Activated naive CD4-positive, alpha-beta T cell treated with anti-CD3 and anti-CD28 coated beads for 36 hours (primary cell): ENCODE measurements at regions of chr1 and their contacts with region 1.

Region 1: DNA sequence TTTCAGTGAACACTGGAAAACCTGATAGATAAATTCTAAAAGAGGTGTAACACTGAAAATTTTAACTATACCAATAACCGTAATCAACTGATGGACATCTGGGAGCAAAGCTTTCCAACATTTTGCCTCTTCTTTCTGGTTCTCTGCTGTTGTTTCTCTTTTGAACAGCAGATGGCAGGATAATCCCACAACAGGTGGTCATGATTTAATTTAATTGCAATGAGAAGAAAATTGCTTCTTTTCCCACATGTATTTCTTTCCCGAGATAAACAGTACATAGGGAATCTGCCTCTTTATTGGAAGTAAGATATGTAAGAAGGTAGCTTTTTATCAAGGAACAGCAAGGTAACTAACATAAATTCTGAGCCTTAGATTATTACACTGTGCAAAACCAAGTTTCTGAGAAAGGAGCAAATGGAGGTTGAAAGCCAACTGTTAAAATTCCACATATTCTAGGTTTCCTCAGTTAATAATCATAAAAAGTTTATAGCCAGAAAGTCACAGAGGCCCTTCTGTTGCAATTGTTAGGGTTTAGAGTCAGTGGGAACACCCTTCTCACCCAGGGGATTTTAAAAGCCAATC is 72.9 kb downstream of the RPS6KA1 start:
- DNase-seq: peak; percentile 62
- H3K4me3 Mint-ChIP-seq: no peak overlapping the region
- H3K27ac Mint-ChIP-seq: no peak overlapping the region
- H3K4me1 Mint-ChIP-seq: peaks cover 8% of the 10 kb centered on the region
- H3K27me3 Mint-ChIP-seq: peaks cover 3% of the 10 kb centered on the region

Region 2: DNA sequence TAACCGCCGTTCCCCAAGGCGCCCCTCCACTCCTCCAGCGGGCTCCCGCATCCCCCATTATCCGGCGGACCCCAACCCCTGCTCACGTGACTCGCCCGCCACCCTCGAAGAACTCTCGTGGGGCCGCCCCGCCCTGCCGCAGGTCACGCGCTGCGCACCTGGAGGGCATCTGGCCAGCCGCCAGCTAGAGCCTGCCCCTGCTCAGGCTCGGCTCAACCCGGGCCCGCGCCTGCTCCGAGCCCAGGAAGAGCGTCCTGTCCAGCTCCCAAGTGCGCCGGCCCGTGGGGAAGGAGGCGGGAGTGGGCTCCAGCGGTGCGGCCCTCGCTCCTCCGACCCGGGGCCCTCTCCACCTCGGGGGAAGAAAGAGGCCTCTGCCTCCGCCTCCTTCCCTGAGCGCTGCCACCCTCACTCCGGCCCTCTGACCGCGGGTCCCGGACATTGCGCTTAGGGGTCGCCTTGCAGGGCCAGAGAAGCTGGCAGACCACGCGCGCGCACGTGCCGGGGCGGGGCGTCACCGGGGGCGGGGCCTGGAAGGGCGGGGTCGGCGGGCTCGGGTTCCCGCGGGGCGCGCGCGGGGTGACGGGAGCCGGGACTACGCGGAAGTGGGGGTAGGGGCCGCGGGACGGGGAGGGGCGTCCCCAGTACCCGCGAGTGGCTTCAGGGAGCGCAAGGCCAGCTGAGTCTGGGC is 101.8 kb before region 1 on chr1:
- CTCF ChIA-PET with region 1: interaction called, 9 read pairs
- intact Hi-C with region 1: loop called (anchors 1 kb)
- DNase-seq: peak; percentile 93
- H3K4me3 Mint-ChIP-seq: peak overlapping the region; percentile 87
- H3K27ac Mint-ChIP-seq: peak overlapping the region; percentile 96
- H3K4me1 Mint-ChIP-seq: peaks cover 18% of the 10 kb centered on the region
- H3K27me3 Mint-ChIP-seq: no peaks in the 10 kb centered on the region

Region 3: DNA sequence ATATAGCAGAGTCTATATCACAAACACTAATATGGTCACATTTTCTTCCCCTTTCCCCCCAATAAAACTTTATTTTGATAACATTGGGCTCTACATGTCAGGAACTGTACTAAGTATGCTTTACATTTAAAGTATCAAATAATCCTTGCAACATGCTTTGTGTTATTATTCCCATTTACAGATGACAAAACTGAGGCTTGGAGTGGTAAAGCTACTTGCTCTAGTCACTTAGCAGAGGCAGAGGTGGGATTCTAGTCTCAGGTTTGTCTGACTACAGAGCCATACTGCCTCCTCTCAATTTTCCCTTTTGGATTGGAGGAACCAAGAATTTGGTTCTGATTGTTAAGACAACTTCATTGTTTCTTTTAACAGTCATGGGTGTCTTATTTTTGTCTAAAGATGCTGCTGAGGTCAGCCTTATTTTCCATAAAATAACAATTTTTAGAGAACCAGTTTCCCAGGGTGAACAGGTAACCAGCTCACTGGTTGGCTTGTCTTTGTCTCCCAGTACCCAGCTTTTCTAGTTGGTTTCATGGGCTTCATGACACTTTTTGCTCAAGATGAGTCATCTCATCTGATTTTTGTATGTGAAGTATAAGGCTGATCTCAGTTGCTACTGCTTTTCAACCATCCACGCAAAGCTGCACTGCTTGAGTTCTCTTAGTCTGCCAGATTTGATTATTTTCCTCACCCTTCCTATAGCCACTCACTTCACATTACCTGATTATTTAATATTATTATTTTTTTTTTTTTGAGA is 12.4 kb after region 1 on chr1:
- CTCF ChIA-PET with region 1: interaction called, 13 read pairs
- intact Hi-C with region 1: no loop called
- DNase-seq: no peak
- H3K4me3 Mint-ChIP-seq: no peak overlapping the region
- H3K27ac Mint-ChIP-seq: no peak overlapping the region
- H3K4me1 Mint-ChIP-seq: peaks cover 19% of the 10 kb centered on the region
- H3K27me3 Mint-ChIP-seq: no peaks in the 10 kb centered on the region

Region 4: DNA sequence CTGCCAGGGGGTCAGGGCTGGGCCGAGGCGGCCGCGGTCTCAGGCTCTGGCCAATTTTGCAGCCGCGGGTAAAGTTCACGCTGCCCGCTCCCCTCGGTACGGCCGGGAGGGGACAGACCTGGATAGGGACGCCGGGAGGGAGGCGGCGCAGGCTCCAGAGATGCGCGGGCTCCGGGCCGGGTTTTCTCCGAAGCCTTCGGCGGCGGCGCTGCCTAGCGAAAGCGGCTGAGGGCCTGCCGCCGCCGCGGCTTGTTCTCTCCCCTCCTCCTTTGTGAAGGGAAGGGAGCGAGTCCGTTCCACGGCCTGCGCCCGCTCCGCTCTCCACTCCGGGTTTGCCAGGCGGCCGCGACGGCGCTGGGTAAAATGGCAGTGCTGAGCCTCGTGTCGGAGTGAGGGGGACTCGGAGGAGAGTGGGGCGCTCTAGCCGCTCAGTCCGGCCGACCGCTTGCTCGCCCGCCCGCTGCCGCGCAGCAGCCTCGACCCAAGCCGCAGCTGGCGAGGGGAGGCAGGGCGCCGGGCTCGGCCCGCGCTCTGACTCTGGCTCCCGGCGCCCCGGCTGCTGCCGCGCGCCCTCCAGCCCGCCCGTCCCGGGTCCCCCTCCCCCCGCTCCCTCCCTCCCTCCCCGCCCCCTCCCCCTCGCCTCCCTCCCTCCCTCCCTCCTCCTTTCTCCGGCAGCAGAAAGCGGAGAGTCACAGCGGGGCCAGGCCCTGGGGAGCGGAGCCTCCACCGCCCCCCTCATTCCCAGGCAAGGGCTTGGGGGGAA is 93.1 kb after region 1 on chr1 and contains the start of gene ARID1A:
- CTCF ChIA-PET with region 1: interaction called, 14 read pairs
- intact Hi-C with region 1: no loop called
- DNase-seq: peak; percentile 95
- H3K4me3 Mint-ChIP-seq: peak within 1 kb of the TSS; percentile 81
- H3K27ac Mint-ChIP-seq: peak within 1 kb of the TSS; percentile 91
- H3K4me1 Mint-ChIP-seq: peaks cover 22% of the 10 kb centered on the region
- H3K27me3 Mint-ChIP-seq: no peaks in the 10 kb centered on the region
- total RNA-seq, gene ARID1A: 65.0 to 65.9 TPM

Region 5: DNA sequence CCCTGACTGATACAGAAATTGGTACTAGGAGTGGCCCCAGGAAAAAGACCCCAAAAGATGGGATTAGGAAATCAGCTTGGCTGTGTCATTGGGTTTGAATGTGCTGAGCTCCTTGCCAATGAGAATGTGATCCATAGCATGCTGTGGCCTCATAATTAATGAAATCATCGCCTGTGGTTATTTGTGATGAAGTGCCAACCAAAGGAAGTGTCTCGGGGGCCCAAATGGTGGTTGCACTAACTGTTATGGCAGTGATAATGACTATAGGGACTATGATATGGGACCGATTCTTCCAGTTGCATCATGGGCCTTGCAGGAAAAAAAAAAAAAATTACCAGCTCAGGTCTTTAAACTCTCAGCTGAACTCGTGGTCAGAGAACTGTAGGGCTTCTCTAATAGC is 208.6 kb after region 1 on chr1:
- CTCF ChIA-PET with region 1: interaction called, 10 read pairs
- intact Hi-C with region 1: no loop called
- DNase-seq: no peak
- H3K4me3 Mint-ChIP-seq: no peak overlapping the region
- H3K27ac Mint-ChIP-seq: no peak overlapping the region
- H3K4me1 Mint-ChIP-seq: peaks cover 14% of the 10 kb centered on the region
- H3K27me3 Mint-ChIP-seq: no peaks in the 10 kb centered on the region

Region 6: GRCh38 chr1:26874896-26875295 is 272.4 kb after region 1 on chr1:
- CTCF ChIA-PET with region 1: interaction called, 10 read pairs
- intact Hi-C with region 1: loop called (anchors 1 kb)
- DNase-seq: no peak
- H3K4me3 Mint-ChIP-seq: no peak overlapping the region
- H3K27ac Mint-ChIP-seq: no peak overlapping the region
- H3K4me1 Mint-ChIP-seq: peaks cover 2% of the 10 kb centered on the region
- H3K27me3 Mint-ChIP-seq: no peaks in the 10 kb centered on the region

Region 7: GRCh38 chr1:27097484-27097917 is 495.0 kb after region 1 on chr1:
- CTCF ChIA-PET with region 1: interaction called, 3 read pairs
- intact Hi-C with region 1: loop called (anchors 5 kb)
- DNase-seq: peak; percentile 86
- H3K4me3 Mint-ChIP-seq: no peak overlapping the region
- H3K27ac Mint-ChIP-seq: no peak overlapping the region
- H3K4me1 Mint-ChIP-seq: peaks cover 7% of the 10 kb centered on the region
- H3K27me3 Mint-ChIP-seq: no peaks in the 10 kb centered on the region